Activated CD8-positive, alpha-beta T cell treated with anti-CD3 and anti-CD28 coated beads, Interleukin-2, amount 10 ng/mL, durations not matched to agents 7 days and 5 days (primary cell): ENCODE measurements at regions of chr20 and their contacts with region 1.

Region 1: DNA sequence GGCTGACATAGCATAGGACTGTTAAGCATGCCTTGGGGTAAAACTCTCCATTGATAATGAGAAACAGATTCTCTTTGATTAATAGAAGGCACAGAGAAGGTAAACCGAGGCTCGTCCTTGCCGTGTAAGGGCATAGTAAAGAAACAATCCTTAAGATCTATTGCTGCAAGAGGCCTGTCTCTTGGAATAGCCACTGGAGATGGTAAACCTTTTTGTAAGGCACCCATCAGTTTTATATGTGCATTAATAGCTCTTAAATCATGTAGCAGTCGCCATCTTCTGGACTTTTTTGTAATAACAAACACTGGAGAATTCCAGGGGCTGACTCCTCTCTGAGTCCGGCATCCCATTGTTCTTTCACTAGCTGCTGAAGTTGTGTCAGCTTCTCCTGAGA is 8.4 kb upstream of the ABHD12 start:
- DNase-seq: peak; percentile 42
- ATAC-seq: peak; percentile 67
- H3K4me3 Mint-ChIP-seq: no peak overlapping the region
- H3K27ac Mint-ChIP-seq: no peak overlapping the region
- H3K4me1 Mint-ChIP-seq: no peaks in the 10 kb centered on the region
- H3K27me3 Mint-ChIP-seq: peaks cover 9% of the 10 kb centered on the region

Region 2: DNA sequence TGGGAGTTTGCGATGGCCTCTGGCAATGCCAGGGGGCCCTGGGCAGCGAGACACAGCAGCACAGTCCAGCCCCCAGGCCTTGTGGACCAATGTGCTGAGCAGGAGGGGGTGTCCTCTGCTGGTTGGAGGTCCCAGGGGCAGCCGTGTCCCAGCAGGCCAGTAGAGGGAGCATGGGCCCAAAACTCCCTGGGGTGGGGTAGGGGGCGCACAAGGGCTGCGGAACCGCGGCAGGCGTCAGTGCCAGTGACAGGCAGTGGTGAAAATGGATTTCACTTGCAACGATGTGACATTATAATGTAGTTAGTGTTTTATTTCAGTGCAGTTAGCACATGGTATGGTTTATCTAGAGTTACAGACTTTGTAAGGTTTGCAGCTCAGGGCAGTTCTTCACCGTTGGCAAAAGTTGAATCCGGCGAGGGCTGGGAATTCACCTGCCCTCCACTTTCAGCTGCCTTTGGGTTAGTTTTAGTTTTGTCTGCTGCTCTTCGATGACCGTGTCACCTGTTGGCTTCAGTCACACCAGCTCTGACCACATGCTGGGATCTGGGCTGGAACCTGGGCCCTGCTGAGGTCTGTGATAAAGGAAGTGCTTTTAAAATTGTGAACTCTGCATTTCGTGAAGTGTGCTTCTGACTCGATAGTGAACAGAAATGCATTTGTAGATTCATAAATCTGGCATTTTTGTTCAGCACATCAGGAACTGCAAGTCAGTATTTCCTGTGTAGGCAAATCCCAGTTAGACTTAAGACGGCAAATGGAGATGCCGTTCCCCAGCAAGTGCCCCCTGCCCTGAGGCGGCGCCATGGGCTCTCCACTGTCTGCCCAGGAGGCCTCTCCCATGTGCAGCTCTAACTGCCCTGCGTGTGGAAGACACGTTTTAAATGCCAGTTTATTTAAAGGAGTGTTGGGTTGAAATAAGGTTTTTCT is 104.3 kb before region 1 on chr20:
- CTCF ChIA-PET with region 1: interaction called, 30 read pairs
- POLR2A ChIA-PET with region 1: no interaction called
- DNase-seq: peak; percentile 65
- ATAC-seq: peak; percentile 73
- H3K4me3 Mint-ChIP-seq: no peak overlapping the region
- H3K27ac Mint-ChIP-seq: no peak overlapping the region
- H3K4me1 Mint-ChIP-seq: peaks cover 1% of the 10 kb centered on the region
- H3K27me3 Mint-ChIP-seq: no peaks in the 10 kb centered on the region

Region 3: GRCh38 chr20:25299806-25300205 is 99.2 kb before region 1 on chr20:
- CTCF ChIA-PET with region 1: interaction called, 30 read pairs
- POLR2A ChIA-PET with region 1: no interaction called
- DNase-seq: no peak
- ATAC-seq: no peak
- H3K4me3 Mint-ChIP-seq: no peak overlapping the region
- H3K27ac Mint-ChIP-seq: no peak overlapping the region
- H3K4me1 Mint-ChIP-seq: peaks cover 1% of the 10 kb centered on the region
- H3K27me3 Mint-ChIP-seq: no peaks in the 10 kb centered on the region

Region 4: DNA sequence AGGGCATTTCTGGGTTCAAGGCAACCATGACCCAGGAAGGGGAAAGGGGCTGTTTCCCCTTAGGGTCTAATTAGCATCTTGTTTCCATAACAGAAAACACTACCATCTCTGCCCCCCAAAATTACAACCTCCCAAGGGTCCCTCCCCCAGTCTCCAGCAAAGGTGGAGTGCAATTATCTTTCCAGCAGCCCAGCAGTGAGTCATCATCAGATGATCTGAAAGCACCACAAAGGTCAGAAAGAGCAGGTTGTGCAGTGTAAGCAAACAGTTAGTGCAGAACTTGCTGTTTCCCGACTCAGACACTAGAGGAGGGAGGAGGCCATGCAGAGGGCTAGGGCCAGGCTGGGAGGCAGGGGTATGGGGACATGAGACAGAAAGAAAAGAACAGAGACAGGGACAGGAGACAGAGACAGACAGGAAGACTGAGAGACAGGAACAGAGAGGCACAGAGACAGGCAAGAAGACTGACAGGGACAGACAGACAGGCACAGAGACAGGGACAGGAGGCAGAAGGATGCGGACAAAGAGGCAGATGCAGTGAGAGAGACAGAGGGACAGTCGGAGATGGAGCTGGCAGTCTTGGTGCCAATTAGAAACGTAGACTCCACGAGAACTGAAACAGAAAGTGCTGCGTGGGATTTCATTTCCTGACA is 88.6 kb before region 1 on chr20:
- CTCF ChIA-PET with region 1: interaction called, 11 read pairs
- POLR2A ChIA-PET with region 1: no interaction called
- DNase-seq: peak; percentile 63
- ATAC-seq: peak; percentile 93
- H3K4me3 Mint-ChIP-seq: peak overlapping the region; percentile 56
- H3K27ac Mint-ChIP-seq: peak overlapping the region; percentile 91
- H3K4me1 Mint-ChIP-seq: peaks cover 37% of the 10 kb centered on the region
- H3K27me3 Mint-ChIP-seq: no peaks in the 10 kb centered on the region